ENCODE measurements at regions of chr5 and their contacts with region 1.

Region 1: GRCh38 chr5:57779383-57780223 is 297.0 kb upstream of the ACTBL2 start:
- DNase-seq: peak; percentile 42
- H3K4me3 ChIP-seq: peak overlapping the region in 1 of 2 experiments; percentile 29; a peak in 1 of 4 replicates
- H3K27ac ChIP-seq: peak overlapping the region; percentile 34 to 39
- H3K4me1 ChIP-seq: peaks cover 6 to 9% of the 10 kb centered on the region in 2 experiments; a peak in 3 of 4 replicates
- H3K27me3 ChIP-seq: no peaks in the 10 kb centered on the region
- CTCF ChIP-seq: peak; percentile 82
- EP300 ChIP-seq: no peak
- RAD21 ChIP-seq: peak; percentile 95

Region 2: GRCh38 chr5:57298295-57298984 is 481.2 kb before region 1 on chr5:
- CTCF ChIA-PET with region 1: interaction called, 51 read pairs
- POLR2A ChIA-PET with region 1: interaction called, 3 read pairs
- DNase-seq: peak; percentile 45
- H3K4me3 ChIP-seq: peak overlapping the region in 1 of 2 experiments; percentile 35; a peak in 1 of 4 replicates
- H3K27ac ChIP-seq: peak overlapping the region; percentile 43 to 63; a peak in 3 of 4 replicates
- H3K4me1 ChIP-seq: peaks cover 0 to 5% of the 10 kb centered on the region in 2 experiments; a peak in 3 of 4 replicates
- H3K27me3 ChIP-seq: no peaks in the 10 kb centered on the region
- CTCF ChIP-seq: peak; percentile 89
- EP300 ChIP-seq: no peak
- RAD21 ChIP-seq: peak; percentile 92

Region 3: GRCh38 chr5:57499262-57500050 is 280.1 kb before region 1 on chr5:
- CTCF ChIA-PET with region 1: interaction called, 61 read pairs
- POLR2A ChIA-PET with region 1: no interaction called
- DNase-seq: peak; percentile 36
- H3K4me3 ChIP-seq: no peak overlapping the region
- H3K27ac ChIP-seq: peak overlapping the region; percentile 4 to 56; a peak in 3 of 4 replicates
- H3K4me1 ChIP-seq: peaks cover 20 to 23% of the 10 kb centered on the region in 2 experiments
- H3K27me3 ChIP-seq: no peaks in the 10 kb centered on the region
- CTCF ChIP-seq: peak; percentile 88
- EP300 ChIP-seq: no peak
- RAD21 ChIP-seq: peak; percentile 81

Region 4: GRCh38 chr5:57804007-57804444 is 24.4 kb after region 1 on chr5:
- CTCF ChIA-PET with region 1: interaction called, 14 read pairs
- POLR2A ChIA-PET with region 1: no interaction called
- DNase-seq: no peak
- H3K4me3 ChIP-seq: no peak overlapping the region
- H3K27ac ChIP-seq: peak overlapping the region; percentile 85 to 89
- H3K4me1 ChIP-seq: peaks cover 0 to 24% of the 10 kb centered on the region in 2 experiments; a peak in 2 of 4 replicates
- H3K27me3 ChIP-seq: no peaks in the 10 kb centered on the region
- CTCF ChIP-seq: no peak
- EP300 ChIP-seq: peak in 1 of 2 experiments; percentile 91; a peak in 3 of 4 replicates
- RAD21 ChIP-seq: no peak

Region 5: GRCh38 chr5:57887851-57888621 is 108.4 kb after region 1 on chr5:
- CTCF ChIA-PET with region 1: interaction called, 38 read pairs
- POLR2A ChIA-PET with region 1: no interaction called
- DNase-seq: peak; percentile 61
- H3K4me3 ChIP-seq: no peak overlapping the region
- H3K27ac ChIP-seq: peak overlapping the region in 1 of 2 experiments; percentile 12; a peak in 2 of 4 replicates
- H3K4me1 ChIP-seq: peaks cover 3 to 18% of the 10 kb centered on the region in 2 experiments; a peak in 3 of 4 replicates
- H3K27me3 ChIP-seq: no peaks in the 10 kb centered on the region
- CTCF ChIP-seq: peak; percentile 66
- EP300 ChIP-seq: no peak
- RAD21 ChIP-seq: peak; percentile 92

Region 6: GRCh38 chr5:58149345-58149744 is 369.7 kb after region 1 on chr5:
- CTCF ChIA-PET with region 1: no interaction called
- POLR2A ChIA-PET with region 1: no interaction called
- DNase-seq: no peak
- H3K4me3 ChIP-seq: no peak overlapping the region
- H3K27ac ChIP-seq: no peak overlapping the region
- H3K4me1 ChIP-seq: no peaks in the 10 kb centered on the region; a peak in 1 of 4 replicates
- H3K27me3 ChIP-seq: no peaks in the 10 kb centered on the region
- CTCF ChIP-seq: no peak
- EP300 ChIP-seq: no peak
- RAD21 ChIP-seq: no peak

Region 7: GRCh38 chr5:58460732-58461286 is 681.2 kb after region 1 on chr5:
- CTCF ChIA-PET with region 1: interaction called, 206 read pairs
- POLR2A ChIA-PET with region 1: no interaction called
- DNase-seq: peak; percentile 83
- H3K4me3 ChIP-seq: peak overlapping the region; percentile 90 to 93
- H3K27ac ChIP-seq: peak overlapping the region; percentile 85 to 87
- H3K4me1 ChIP-seq: peaks cover 0 to 7% of the 10 kb centered on the region in 2 experiments; a peak in 2 of 4 replicates
- H3K27me3 ChIP-seq: no peaks in the 10 kb centered on the region
- CTCF ChIP-seq: peak; percentile 76
- EP300 ChIP-seq: 0 out of 4 replicates have a peak, but pooled peaks of 1 of the 2 experiments have one; percentile 14
- RAD21 ChIP-seq: peak; percentile 95